A549 (cell line): ENCODE measurements at regions of chr2 and their contacts with region 1.

Region 1: GRCh38 chr2:160375802-160376469 is 117.7 kb downstream of the RBMS1 start:
- DNase-seq: peak in 1 of 2 experiments; percentile 35
- ATAC-seq: no peak
- H3K4me3 ChIP-seq: peak overlapping the region; percentile 7; the same call in 1 of the 3 replicates
- H3K27ac ChIP-seq: peak overlapping the region; percentile 84 to 88
- H3K4me1 ChIP-seq: peaks cover 96% of the 10 kb centered on the region
- CTCF ChIP-seq: no peak
- EP300 ChIP-seq: no peak; a peak in 1 of 5 replicates
- POLR2A ChIP-seq: no peak
- RAD21 ChIP-seq: no peak

Region 2: DNA sequence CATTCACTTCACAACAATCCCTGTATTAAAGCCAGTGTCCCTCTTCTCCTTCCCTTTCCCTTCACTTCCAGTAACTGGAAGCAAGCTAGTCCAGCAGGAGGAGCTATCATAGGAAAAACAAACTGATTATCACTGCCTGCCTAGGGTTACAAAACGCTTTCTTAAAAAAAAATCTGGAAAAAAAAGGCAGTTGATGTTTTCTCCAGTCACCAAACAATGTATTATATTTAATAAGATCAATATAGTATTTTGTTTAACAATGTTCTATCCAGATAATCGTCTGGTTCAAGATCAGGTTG is 97.1 kb before region 1 on chr2:
- CTCF ChIA-PET with region 1: no interaction called
- POLR2A ChIA-PET with region 1: no interaction called
- DNase-seq: peak in 1 of 2 experiments; percentile 41
- ATAC-seq: peak; percentile 66 to 73; a peak in 3 of 6 replicates
- H3K4me3 ChIP-seq: no peak overlapping the region
- H3K27ac ChIP-seq: peak overlapping the region; percentile 17 to 18; a peak in 1 of 6 replicates
- H3K4me1 ChIP-seq: peaks cover 61% of the 10 kb centered on the region
- CTCF ChIP-seq: peak; percentile 51
- EP300 ChIP-seq: no peak
- POLR2A ChIP-seq: no peak
- RAD21 ChIP-seq: peak; percentile 31 to 40; a peak in 3 of 5 replicates

Region 3: DNA sequence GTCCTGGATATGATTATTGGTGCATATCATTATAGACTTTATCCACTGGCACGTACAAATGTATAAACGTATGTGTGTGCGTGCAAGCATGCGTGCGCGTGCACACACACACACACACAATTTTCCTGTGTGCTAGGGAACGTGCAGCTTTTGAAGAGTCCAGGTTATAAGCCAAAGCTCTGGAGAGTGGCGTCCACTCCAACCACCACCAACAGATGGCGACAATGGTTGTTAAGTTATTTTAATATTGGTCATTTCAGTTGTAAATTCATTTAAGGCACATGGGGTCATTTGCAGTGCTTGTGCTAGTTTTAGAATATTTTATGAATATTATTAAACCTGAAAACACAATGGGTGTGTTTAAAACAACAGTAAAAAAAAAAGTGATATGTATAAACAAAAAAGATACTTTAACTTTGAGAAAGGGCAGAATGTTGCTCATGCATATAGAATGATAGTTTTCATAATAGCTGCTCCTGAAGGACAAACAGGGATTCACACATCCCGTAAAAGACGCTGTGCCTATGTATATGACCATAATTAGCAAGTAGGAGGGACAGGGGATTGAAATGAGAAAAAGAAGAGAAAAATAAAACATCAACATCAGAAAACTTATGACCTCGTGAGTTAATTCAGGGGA is 51.7 kb before region 1 on chr2:
- CTCF ChIA-PET with region 1: interaction called, 11 read pairs
- POLR2A ChIA-PET with region 1: no interaction called
- DNase-seq: peak; percentile 15 to 64
- ATAC-seq: peak in 1 of 2 experiments; percentile 71; a peak in 3 of 6 replicates
- H3K4me3 ChIP-seq: no peak overlapping the region
- H3K27ac ChIP-seq: peak overlapping the region in 1 of 2 experiments; percentile 29; a peak in 1 of 6 replicates
- H3K4me1 ChIP-seq: peaks cover 92% of the 10 kb centered on the region
- CTCF ChIP-seq: peak; percentile 79
- EP300 ChIP-seq: no peak
- POLR2A ChIP-seq: no peak
- RAD21 ChIP-seq: peak; percentile 71 to 76

Region 4: GRCh38 chr2:160353166-160353565 is 22.8 kb before region 1 on chr2:
- CTCF ChIA-PET with region 1: interaction called, 30 read pairs
- POLR2A ChIA-PET with region 1: no interaction called
- DNase-seq: peak in 1 of 2 experiments; percentile 46
- ATAC-seq: peak in 1 of 2 experiments; percentile 61; a peak in 3 of 6 replicates
- H3K4me3 ChIP-seq: no peak overlapping the region
- H3K27ac ChIP-seq: peak overlapping the region; percentile 79 to 85
- H3K4me1 ChIP-seq: peaks cover 89% of the 10 kb centered on the region
- CTCF ChIP-seq: peak; percentile 50
- EP300 ChIP-seq: no peak
- POLR2A ChIP-seq: no peak
- RAD21 ChIP-seq: peak; percentile 67 to 73

Region 5: DNA sequence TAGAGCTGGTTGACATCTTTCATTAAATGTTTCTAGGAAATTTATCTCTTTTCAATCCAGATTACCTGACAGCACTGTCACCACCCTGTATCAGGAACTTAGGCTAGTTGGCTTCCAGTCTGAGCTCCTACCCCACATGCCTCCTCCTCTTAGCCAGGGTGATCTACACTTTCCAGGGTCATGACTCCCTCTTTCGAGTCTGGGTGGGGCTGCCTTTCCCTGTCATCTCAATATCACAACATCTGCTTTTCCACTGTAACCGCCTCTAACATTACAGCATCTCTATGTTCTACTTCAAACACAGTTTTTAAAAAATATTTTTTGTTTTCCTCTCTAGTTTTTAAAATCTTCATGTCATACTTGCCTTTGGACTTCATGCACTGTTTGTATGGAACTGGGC is 11.6 kb before region 1 on chr2:
- CTCF ChIA-PET with region 1: interaction called, 10 read pairs
- POLR2A ChIA-PET with region 1: no interaction called
- DNase-seq: no peak
- ATAC-seq: peak in 1 of 2 experiments; percentile 39; a peak in 3 of 6 replicates
- H3K4me3 ChIP-seq: no peak overlapping the region
- H3K27ac ChIP-seq: peak overlapping the region; percentile 12 to 22; a peak in 3 of 6 replicates
- H3K4me1 ChIP-seq: peaks cover 98% of the 10 kb centered on the region
- CTCF ChIP-seq: no peak
- EP300 ChIP-seq: no peak
- POLR2A ChIP-seq: no peak
- RAD21 ChIP-seq: no peak

Region 6: GRCh38 chr2:160440888-160441287 is 65.0 kb after region 1 on chr2:
- CTCF ChIA-PET with region 1: no interaction called
- POLR2A ChIA-PET with region 1: no interaction called
- DNase-seq: no peak
- ATAC-seq: no peak
- H3K4me3 ChIP-seq: no peak overlapping the region
- H3K27ac ChIP-seq: no peak overlapping the region
- H3K4me1 ChIP-seq: no peaks in the 10 kb centered on the region
- CTCF ChIP-seq: no peak
- EP300 ChIP-seq: no peak
- POLR2A ChIP-seq: no peak
- RAD21 ChIP-seq: no peak